ENCODE measurements at regions of chr1 and their contacts with region 1.

Region 1: DNA sequence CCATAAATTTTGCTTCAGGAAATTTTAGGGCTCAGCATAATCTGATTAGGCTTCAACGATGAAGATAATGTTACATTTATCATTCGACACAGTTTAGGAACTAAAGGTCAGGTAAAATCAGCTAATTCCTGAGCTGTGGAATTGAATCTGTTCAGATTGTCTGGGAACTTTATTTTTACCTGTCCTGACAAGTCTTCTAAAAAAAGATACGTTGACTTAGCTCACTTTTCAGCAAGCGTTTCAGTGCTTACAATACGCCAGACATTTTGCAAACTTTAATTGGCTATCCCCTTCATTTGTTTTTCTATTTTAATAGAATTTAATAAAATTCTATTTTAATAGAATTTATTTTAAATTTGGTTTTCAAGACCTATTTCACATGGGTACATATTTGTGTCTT is 57.8 kb downstream of the POU2F1 start:
- DNase-seq: no peak
- H3K4me3 Mint-ChIP-seq: no peak overlapping the region
- H3K27ac Mint-ChIP-seq: no peak overlapping the region
- H3K4me1 Mint-ChIP-seq: peaks cover 17% of the 10 kb centered on the region
- H3K27me3 Mint-ChIP-seq: no peaks in the 10 kb centered on the region
- CTCF ChIP-seq: no peak

Region 2: GRCh38 chr1:167291539-167292185 is 13.2 kb after region 1 on chr1:
- CTCF ChIA-PET with region 1: interaction called, 6 read pairs
- POLR2A ChIA-PET with region 1: interaction called, 11 read pairs
- intact Hi-C with region 1: no loop called
- DNase-seq: no peak
- H3K4me3 Mint-ChIP-seq: no peak overlapping the region
- H3K27ac Mint-ChIP-seq: no peak overlapping the region
- H3K4me1 Mint-ChIP-seq: peaks cover 13% of the 10 kb centered on the region
- H3K27me3 Mint-ChIP-seq: no peaks in the 10 kb centered on the region
- CTCF ChIP-seq: no peak

Measured in MCF 10A (cell line).